Posterior cingulate gyrus (tissue), 11 donors: ENCODE measurements at regions of chr1 and their contacts with region 1.

Region 1: DNA sequence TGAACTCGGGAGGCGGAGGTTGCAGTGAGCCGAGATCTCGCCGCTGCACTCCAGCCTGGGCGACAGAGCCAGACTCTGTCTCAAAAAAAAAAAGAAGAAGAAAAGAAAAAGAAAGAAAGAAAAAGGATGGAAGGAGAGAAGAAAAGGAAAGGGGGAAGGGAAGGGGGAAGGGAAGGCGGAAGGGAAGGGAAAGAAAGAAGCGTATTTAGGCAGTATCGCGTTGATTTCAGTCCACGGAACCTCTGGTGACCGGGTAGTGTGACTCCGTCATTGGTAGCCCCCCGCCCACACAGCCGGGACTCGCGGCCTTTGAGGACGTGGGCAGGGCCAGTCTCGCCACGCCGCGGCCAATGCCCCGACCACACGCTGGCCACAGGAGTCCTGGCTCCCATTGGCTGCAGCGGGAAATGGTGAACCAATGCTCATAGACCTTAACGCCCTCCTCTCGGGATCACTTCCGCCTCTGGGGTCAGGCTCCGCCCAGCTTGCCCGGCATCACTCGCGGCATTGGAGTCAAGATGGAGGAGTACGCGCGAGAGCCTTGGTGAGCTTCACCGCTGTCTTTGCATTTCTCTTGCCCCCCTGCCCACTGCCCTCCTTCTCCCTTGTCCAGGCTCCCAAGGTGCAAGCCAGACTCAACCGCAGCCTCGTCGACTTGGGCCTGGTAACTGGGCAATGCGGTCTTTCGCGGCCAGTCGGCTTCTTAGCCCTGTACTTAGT is at the start of gene TIMM17A:
- DNase-seq: peak; percentile 95 to 99 (median 98)

Region 2: GRCh38 chr1:200938955-200939354 is 1016.2 kb before region 1 on chr1:
- intact Hi-C with region 1: no loop called
- DNase-seq: no peak

Region 3: DNA sequence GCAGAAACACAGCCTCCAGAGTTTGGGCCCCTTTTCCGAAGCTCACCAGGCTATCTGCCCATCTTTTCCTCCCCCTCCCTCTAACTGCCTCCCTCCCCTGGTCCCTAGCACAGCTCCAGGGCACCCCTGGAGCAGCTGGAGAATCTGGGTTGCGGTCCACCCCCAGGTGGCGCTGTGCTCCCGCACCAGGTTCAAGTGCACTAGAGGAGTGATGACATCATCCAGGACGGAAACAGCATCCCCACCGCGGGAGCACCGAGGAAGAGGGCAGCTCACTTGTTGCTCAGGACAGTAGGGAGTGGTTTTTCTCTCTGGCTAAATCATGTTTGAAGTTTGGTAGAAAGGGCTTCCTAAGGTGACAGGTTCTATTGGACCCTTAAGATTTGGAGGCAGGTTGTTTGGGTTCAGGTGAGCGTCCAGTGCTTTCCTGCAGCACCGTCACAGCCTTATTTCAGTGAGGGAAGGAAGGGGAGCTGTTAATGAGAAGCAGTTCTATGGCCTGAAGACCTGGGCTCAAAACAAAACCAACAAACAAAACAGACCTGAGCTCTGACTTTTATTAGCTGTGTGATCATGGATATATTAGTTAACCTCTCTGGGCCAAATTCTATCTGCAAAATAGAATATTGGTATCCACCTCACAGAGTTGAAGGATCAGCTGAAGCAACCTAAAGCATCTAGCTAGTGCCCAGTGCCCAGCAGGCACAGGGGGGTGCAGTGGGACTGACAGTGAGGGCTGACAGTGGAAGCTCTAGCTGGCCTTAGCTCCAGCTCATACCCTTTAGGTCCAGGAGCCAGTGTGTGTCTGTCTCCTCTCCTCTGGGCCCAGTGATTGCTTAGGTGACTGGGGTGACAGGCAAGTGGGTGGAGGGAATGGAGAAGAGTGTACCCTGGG is 59.0 kb before region 1 on chr1:
- intact Hi-C with region 1: loop called (anchors 5 kb)
- DNase-seq: peak; percentile 72 to 98 (median 87)

Region 4: GRCh38 chr1:202034683-202035462 is 79.7 kb after region 1 on chr1:
- intact Hi-C with region 1: no loop called
- DNase-seq: peak in 1 of 10 donors; percentile 57